CD4-positive, alpha-beta T cell (primary cell): ENCODE measurements at regions of chr2 and their contacts with region 1.

Region 1: DNA sequence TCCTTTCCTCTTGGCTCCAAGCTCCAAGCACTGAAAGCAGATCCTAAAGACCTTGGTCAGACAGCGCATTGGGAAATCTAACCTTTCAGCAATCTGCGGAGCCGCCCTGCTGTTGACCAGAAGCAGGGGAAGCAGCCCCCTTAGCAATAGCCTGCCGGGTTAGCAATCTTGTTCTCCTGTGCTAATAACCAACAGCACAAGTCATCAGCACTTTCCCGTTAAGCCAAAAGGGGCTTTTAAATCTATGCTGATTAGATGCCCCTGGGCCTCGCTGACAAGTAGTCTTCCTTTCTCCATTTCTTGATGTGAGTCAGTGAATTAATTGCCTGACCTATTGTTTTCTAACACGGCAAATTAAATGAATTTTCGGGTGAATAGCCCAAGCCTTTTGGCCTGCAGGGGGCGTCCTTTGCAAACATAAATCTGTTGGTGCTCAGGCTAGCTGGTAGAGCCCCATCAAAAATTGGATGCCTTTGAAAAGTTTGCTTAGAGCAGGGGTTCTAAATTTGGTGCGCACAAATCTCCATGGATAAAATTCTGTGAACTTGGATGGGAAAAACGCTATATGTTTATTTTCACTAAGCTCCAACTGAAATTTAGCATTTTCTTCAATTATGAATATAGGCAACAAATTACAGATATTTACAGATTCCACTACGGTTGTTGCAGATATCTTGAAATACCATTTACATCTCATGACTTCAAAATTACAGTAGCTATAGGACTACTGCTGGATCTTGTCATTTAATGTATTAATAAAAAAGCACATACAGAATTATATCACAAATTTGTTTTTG is 24.6 kb downstream of the MAIP1 start:
- DNase-seq: peak; percentile 70 to 90 (median 84)
- ATAC-seq: peak; percentile 63
- H3K4me3 ChIP-seq: no peak overlapping the region
- H3K4me3 Mint-ChIP-seq: no peak overlapping the region
- H3K27ac ChIP-seq: no peak overlapping the region
- H3K27ac Mint-ChIP-seq: no peak overlapping the region
- H3K4me1 ChIP-seq: peaks cover 4% of the 10 kb centered on the region
- H3K4me1 Mint-ChIP-seq: peaks cover 5% of the 10 kb centered on the region
- H3K27me3 ChIP-seq: no peaks in the 10 kb centered on the region
- H3K27me3 Mint-ChIP-seq: no peaks in the 10 kb centered on the region
- CTCF ChIP-seq: peak; percentile 80

Region 2: GRCh38 chr2:198973181-198973580 is 1006.8 kb before region 1 on chr2:
- CTCF ChIA-PET with region 1: no interaction called
- POLR2A ChIA-PET with region 1: no interaction called
- intact Hi-C with region 1: no loop called
- DNase-seq: no peak
- ATAC-seq: no peak
- H3K4me3 ChIP-seq: no peak overlapping the region
- H3K4me3 Mint-ChIP-seq: no peak overlapping the region
- H3K27ac ChIP-seq: no peak overlapping the region
- H3K27ac Mint-ChIP-seq: no peak overlapping the region
- H3K4me1 ChIP-seq: no peaks in the 10 kb centered on the region
- H3K4me1 Mint-ChIP-seq: no peaks in the 10 kb centered on the region
- H3K27me3 ChIP-seq: no peaks in the 10 kb centered on the region
- H3K27me3 Mint-ChIP-seq: no peaks in the 10 kb centered on the region
- CTCF ChIP-seq: no peak

Region 3: DNA sequence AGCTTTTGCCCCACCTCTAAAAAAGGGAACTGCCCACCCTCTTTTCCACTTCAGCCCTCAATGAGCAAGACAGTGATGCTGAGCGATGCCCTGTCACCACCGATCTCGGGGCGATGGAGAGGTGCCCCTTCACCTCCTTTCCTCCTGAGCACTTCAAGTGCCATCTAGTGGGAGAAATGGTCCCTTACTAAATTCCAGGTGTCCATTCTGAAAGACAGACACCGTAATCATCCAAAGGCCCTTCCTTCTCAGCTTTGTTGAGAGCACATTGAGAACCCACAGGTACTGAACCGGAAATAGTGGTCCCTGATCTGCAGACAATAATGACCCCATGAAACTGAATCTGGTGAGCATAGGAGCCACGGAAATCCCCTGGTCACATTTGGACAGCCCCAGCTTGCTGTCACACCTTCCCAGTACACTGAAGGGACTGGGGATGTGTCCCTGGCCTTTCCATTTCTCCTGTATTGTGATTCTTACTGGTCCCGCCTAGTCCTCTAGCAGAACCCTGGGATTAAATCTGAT is 491.4 kb after region 1 on chr2:
- CTCF ChIA-PET with region 1: interaction called, 8 read pairs
- POLR2A ChIA-PET with region 1: interaction called, 4 read pairs
- intact Hi-C with region 1: loop called (anchors 1 to 2 kb)
- DNase-seq: peak in 9 of 14 experiments; percentile 8 to 72 (median 33)
- ATAC-seq: no peak
- H3K4me3 ChIP-seq: no peak overlapping the region
- H3K4me3 Mint-ChIP-seq: peak overlapping the region; percentile 70
- H3K27ac ChIP-seq: no peak overlapping the region
- H3K27ac Mint-ChIP-seq: peak overlapping the region; percentile 3
- H3K4me1 ChIP-seq: peaks cover 29% of the 10 kb centered on the region
- H3K4me1 Mint-ChIP-seq: peaks cover 35% of the 10 kb centered on the region
- H3K27me3 ChIP-seq: no peaks in the 10 kb centered on the region
- H3K27me3 Mint-ChIP-seq: no peaks in the 10 kb centered on the region
- CTCF ChIP-seq: peak; percentile 71

Region 4: GRCh38 chr2:200483729-200484198 is 503.7 kb after region 1 on chr2:
- CTCF ChIA-PET with region 1: interaction called, 9 read pairs
- POLR2A ChIA-PET with region 1: no interaction called
- intact Hi-C with region 1: loop called (anchors 1 to 2 kb)
- DNase-seq: peak in 1 of 14 experiments; percentile 17
- ATAC-seq: no peak
- H3K4me3 ChIP-seq: no peak overlapping the region
- H3K4me3 Mint-ChIP-seq: no peak overlapping the region
- H3K27ac ChIP-seq: no peak overlapping the region
- H3K27ac Mint-ChIP-seq: no peak overlapping the region
- H3K4me1 ChIP-seq: peaks cover 5% of the 10 kb centered on the region
- H3K4me1 Mint-ChIP-seq: no peaks in the 10 kb centered on the region
- H3K27me3 ChIP-seq: no peaks in the 10 kb centered on the region
- H3K27me3 Mint-ChIP-seq: no peaks in the 10 kb centered on the region
- CTCF ChIP-seq: no peak

Region 5: GRCh38 chr2:200703127-200703925 is 723.3 kb after region 1 on chr2:
- CTCF ChIA-PET with region 1: no interaction called
- POLR2A ChIA-PET with region 1: no interaction called
- intact Hi-C with region 1: loop called (anchors 1 to 5 kb)
- DNase-seq: peak in 3 of 14 experiments; percentile 29 to 54 (median 50)
- ATAC-seq: peak; percentile 49
- H3K4me3 ChIP-seq: no peak overlapping the region
- H3K4me3 Mint-ChIP-seq: no peak overlapping the region
- H3K27ac ChIP-seq: no peak overlapping the region
- H3K27ac Mint-ChIP-seq: no peak overlapping the region
- H3K4me1 ChIP-seq: no peaks in the 10 kb centered on the region
- H3K4me1 Mint-ChIP-seq: no peaks in the 10 kb centered on the region
- H3K27me3 ChIP-seq: no peaks in the 10 kb centered on the region
- H3K27me3 Mint-ChIP-seq: peaks cover 5% of the 10 kb centered on the region
- CTCF ChIP-seq: peak; percentile 29